ENCODE measurements at regions of chr22 and their contacts with region 1.

Region 1: DNA sequence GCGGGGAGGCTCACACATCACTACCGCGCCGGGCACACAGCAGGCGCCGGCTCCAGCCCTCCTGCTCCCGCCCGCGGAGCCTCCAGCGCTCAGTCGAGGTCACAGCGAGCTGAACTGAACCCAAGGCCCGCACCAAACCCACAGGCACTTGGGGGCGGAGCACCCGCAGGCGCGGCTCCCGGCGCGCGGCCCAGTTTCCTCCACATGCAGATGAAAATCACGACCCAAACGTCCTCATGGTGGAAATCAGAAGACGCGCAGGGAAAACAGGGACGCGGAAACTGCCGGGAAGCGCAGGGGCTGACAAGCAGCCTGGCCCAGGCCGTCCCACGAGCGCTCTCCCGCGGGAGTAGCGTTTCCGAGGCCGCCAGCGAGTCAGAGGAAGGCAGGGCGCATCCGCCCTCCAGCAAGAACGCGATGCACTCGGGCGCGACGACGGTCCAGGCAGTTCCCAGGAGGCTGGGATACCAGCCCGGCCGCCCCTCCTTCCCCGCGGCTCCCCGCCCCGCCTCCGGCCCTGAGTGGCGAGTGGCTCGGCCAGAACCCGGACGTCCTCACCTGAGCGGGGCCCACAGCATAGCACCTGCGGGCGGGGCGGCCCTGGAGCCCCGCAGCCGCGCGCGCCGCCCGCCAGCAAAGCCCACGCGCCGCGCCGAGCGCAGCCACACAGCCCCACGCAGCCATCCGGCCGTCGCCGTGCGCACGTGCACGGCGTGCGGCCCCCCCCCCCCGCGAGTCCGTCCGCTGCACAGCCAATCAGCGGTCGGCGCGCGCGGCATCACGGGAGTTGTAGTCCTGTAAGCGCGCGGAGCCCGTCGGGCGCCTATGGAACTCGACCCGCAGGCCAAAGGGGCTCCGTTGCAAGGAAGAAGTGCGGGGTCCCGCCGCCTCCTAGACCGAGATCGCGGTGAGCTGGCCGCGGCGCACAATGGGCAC is at the start of gene HDHD5:
- DNase-seq: peak; percentile 72

Region 2: DNA sequence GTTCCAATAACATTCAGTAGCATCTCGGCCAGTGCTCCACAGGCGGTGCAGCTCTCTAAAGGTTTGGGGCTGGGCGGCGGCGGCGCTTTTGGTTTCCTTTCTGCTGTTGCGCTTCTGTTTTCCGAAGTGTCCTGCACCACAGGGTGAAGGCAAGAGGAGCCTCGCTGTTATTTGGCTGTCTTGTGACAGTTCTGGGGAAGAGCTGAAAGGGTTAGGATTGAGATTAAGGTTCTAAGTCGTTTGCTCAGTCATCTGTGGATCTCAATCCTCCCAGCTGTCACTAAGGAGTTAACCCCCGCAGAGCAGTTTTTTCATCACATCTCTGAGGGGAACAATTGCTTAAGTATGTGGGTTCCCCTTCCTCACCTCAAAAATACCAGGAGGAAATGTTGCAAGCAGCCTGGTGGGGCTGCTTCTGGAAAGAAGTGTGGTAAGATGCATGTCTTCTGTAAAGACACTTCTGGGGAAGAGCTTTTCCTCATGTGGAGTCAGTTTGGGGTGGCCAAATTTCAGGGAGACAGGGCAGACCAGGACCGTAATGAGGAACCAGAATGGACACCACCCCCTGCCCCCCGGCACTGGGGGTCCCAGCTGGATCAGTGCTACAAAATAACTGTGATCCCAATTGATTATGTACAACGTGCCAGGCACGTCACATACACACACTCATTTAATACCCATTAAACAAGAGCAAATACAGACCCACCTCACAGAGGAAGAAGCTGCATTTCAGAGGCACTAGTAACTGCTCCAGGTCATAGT is 51.9 kb before region 1 on chr22:
- in situ Hi-C with region 1: loop called (anchors 10 kb)
- DNase-seq: peak; percentile 56

Region 3: GRCh38 chr22:17303840-17304779 is 145.3 kb after region 1 on chr22:
- in situ Hi-C with region 1: no loop called
- DNase-seq: no peak

Measured in KBM-7 (cell line).